Ascending aorta (tissue), 2 donors: ENCODE measurements at regions of chr12 and their contacts with region 1.

Region 1: GRCh38 chr12:15700595-15700994 is 88.6 kb downstream of the EPS8 start:
- DNase-seq: no peak
- H3K4me3 ChIP-seq: no peak overlapping the region
- H3K27ac ChIP-seq: peak overlapping the region; percentile 87 to 90
- H3K4me1 ChIP-seq: peaks cover 9 to 68% of the 10 kb centered on the region in 2 donors
- H3K27me3 ChIP-seq: no peaks in the 10 kb centered on the region
- CTCF ChIP-seq: no peak

Region 2: DNA sequence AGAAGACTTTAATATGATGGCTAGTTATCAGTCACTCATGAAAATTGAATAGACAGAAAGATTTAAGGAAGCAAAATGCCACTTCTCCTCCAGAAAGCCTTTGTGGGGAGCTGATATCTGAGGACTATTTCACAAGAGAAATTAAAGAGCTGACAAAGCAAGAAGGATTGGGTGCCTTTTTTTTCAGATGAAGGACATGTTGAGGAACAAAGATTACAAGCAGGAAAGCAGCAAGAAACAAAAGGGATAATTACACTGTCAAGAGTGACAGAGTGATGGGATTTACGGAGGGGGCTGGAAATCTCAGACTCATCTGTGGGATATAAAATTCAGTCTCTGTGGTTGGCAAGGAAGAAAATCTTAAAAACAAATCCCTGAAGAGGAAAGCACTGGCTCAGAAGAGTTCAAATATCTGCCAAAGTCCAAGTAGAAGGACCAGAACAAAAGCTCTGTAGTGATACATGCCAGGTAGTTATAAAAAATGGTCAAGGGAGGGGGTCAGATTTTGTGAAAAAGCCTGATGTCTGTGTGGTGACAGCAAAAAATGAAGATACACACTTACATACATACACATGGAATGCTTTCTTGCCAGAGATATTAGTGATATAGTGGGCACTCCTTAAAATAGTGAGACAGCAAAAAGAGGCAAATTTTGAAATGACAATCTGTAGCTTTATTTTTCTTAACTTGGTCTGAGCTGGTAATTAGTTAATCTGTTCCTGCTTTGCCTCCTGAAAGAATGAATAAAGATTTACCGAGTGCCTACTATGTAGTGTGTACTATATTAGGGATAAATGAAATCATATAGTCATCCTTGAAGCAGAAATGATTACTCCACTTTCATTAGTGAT is 25.7 kb after region 1 on chr12:
- intact Hi-C with region 1: loop called (anchors 2 kb)
- DNase-seq: no peak
- H3K4me3 ChIP-seq: peak overlapping the region in 1 of 2 donors; percentile 11
- H3K27ac ChIP-seq: peak overlapping the region; percentile 10 to 73
- H3K4me1 ChIP-seq: peaks cover 0 to 27% of the 10 kb centered on the region in 2 donors
- H3K27me3 ChIP-seq: no peaks in the 10 kb centered on the region
- CTCF ChIP-seq: no peak